Activated CD8-positive, alpha-beta T cell treated with anti-CD3 and anti-CD28 coated beads, Interleukin-2, amount 10 ng/mL, durations not matched to agents 7 days and 5 days (primary cell): ENCODE measurements at regions of chr2 and their contacts with region 1.

Region 1: GRCh38 chr2:41869542-41870264 is 178.1 kb upstream of the PKDCC start:
- DNase-seq: peak; percentile 77
- ATAC-seq: peak; percentile 84
- H3K4me3 Mint-ChIP-seq: no peak overlapping the region
- H3K27ac Mint-ChIP-seq: no peak overlapping the region
- H3K4me1 Mint-ChIP-seq: peaks cover 6% of the 10 kb centered on the region
- H3K27me3 Mint-ChIP-seq: peaks cover 22% of the 10 kb centered on the region

Region 2: DNA sequence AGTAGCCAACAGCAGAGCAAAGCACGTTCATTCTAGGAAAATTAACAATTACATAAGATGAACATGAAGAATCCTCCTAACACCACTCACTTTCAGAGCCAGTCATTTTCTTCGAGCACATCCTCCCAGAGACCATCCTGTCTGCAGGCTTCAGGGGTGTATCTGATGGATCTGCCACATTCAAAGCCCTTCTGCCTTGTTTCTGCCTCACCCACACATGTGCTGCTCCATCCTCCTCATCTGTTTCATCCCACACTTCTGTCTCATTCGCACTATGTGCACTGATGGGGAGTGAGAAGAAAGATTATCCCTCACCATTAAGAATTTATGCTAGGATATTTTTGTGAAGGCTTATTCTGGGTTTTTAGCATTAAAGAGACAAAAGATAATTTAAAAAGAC is 109.8 kb before region 1 on chr2:
- CTCF ChIA-PET with region 1: no interaction called
- POLR2A ChIA-PET with region 1: no interaction called
- DNase-seq: no peak
- ATAC-seq: no peak
- H3K4me3 Mint-ChIP-seq: no peak overlapping the region
- H3K27ac Mint-ChIP-seq: no peak overlapping the region
- H3K4me1 Mint-ChIP-seq: no peaks in the 10 kb centered on the region
- H3K27me3 Mint-ChIP-seq: peaks cover 4% of the 10 kb centered on the region

Region 3: GRCh38 chr2:41840702-41841551 is 28.8 kb before region 1 on chr2:
- CTCF ChIA-PET with region 1: interaction called, 19 read pairs
- POLR2A ChIA-PET with region 1: no interaction called
- DNase-seq: peak; percentile 99
- ATAC-seq: peak; percentile 100
- H3K4me3 Mint-ChIP-seq: peak overlapping the region; percentile 84
- H3K27ac Mint-ChIP-seq: peak overlapping the region; percentile 84
- H3K4me1 Mint-ChIP-seq: peaks cover 12% of the 10 kb centered on the region
- H3K27me3 Mint-ChIP-seq: peaks cover 13% of the 10 kb centered on the region

Region 4: DNA sequence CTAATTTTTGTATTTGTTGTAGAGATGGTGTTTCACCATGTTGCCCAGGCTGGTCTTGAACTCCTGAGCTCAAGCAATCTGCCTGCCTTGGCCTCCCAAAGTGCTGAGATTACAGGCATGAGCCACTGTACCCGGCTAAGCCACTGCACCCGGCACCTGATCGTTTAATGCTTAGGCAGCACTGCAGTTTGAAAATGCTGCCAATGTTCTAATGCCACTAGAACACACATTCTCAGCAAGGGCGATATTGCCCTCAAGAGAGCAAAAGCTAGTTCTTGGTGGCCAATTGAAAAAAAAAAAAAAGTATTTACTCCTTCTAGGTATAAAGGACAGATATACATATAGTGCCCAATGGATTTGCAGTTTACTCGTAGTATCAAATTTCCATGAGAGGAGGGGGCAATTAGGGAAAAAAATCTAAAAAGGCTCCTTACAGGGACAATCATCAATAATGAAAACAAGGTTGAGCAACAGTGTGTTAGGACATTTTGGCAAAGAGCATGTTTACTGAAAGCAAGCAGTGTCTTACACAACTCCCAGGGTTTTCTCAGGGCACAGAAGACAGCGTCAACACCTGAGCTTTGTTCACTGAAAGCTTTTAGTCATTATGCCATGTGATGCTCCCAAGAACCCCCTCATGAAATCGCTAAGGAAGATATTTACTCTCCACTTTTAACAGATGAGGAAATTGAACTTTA is 21.8 kb before region 1 on chr2:
- CTCF ChIA-PET with region 1: interaction called, 27 read pairs
- POLR2A ChIA-PET with region 1: no interaction called
- DNase-seq: no peak
- ATAC-seq: no peak
- H3K4me3 Mint-ChIP-seq: no peak overlapping the region
- H3K27ac Mint-ChIP-seq: no peak overlapping the region
- H3K4me1 Mint-ChIP-seq: no peaks in the 10 kb centered on the region
- H3K27me3 Mint-ChIP-seq: peaks cover 32% of the 10 kb centered on the region

Region 5: DNA sequence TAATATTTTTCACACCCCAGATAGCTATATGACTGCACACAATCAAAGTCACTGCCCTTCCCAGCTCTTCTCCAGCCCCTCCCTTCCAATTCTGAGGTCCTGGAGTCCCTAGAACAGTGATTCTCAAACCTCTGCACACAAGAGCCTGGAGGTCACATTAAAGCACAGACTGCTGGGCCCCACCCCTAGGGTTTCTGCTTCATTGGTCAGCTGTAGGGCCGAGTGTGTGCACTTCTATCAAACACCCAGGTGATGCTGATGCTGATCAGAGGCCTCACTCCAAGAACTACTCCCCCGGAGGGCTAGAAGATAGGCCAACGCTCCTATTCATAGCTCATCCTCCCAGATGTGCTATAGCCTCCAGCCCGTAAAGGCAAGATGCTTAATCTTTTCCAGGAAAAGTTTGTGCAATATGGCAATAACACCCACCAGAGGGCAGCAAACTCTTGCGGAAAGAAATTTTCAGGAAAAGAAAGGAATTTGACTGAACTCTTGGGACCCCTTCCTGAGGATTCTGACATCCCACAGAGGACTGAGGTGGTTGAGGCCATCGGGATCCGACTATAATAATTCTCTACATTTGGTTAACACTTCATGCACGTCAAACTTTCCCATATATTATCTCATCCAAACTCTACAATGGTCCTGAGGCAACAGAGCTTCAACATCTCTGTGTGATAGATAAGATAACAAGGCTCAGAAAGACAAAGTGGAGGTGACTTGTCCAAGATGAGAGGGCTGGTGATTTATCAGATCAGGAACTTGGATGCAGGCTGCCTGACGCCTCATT is 16.1 kb before region 1 on chr2:
- CTCF ChIA-PET with region 1: interaction called, 27 read pairs
- POLR2A ChIA-PET with region 1: no interaction called
- DNase-seq: no peak
- ATAC-seq: no peak
- H3K4me3 Mint-ChIP-seq: no peak overlapping the region
- H3K27ac Mint-ChIP-seq: no peak overlapping the region
- H3K4me1 Mint-ChIP-seq: no peaks in the 10 kb centered on the region
- H3K27me3 Mint-ChIP-seq: peaks cover 13% of the 10 kb centered on the region